IMR-90 (cell line): ENCODE measurements at regions of chr6 and their contacts with region 1.

Region 1: GRCh38 chr6:98845211-98846020 is 11.0 kb downstream of the POU3F2 start:
- DNase-seq: peak; percentile 78
- ATAC-seq: peak; percentile 92
- H3K4me3 ChIP-seq: no peak overlapping the region
- H3K27ac ChIP-seq: no peak overlapping the region
- H3K4me1 ChIP-seq: peaks cover 6% of the 10 kb centered on the region; the same call in 1 of the 2 replicates
- H3K27me3 ChIP-seq: peaks cover 82% of the 10 kb centered on the region
- CTCF ChIP-seq: peak; percentile 94
- POLR2A ChIP-seq: no peak; the same call in 1 of the 2 replicates
- RAD21 ChIP-seq: peak; percentile 93

Region 2: DNA sequence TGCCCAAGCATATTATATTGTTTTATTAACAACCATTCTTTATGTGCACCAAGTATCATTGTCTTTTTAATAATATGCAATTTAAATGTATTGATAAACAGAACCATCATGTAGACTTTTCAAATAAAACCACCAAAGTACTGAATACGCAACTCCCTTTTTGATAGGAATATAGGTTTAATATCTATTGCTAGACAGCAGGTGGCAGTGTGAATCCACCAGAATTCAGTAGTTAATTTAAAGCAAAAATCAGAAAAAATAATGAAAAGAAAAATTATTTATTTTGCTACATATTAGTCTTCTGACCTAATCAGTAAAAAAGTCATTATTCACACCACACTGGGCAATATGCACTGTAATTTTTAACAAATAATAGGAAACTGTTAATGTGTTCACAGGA is 1777.2 kb before region 1 on chr6:
- CTCF ChIA-PET with region 1: no interaction called
- POLR2A ChIA-PET with region 1: no interaction called
- dilution Hi-C with region 1: no loop called
- in situ Hi-C with region 1: no loop called
- intact Hi-C with region 1: loop called (anchors 1 kb)
- DNase-seq: peak; percentile 49
- ATAC-seq: peak; percentile 63; the same call in 1 of the 2 replicates
- H3K4me3 ChIP-seq: no peak overlapping the region
- H3K27ac ChIP-seq: no peak overlapping the region
- H3K4me1 ChIP-seq: no peaks in the 10 kb centered on the region
- H3K27me3 ChIP-seq: peaks cover 9% of the 10 kb centered on the region
- CTCF ChIP-seq: peak; percentile 70
- POLR2A ChIP-seq: no peak
- RAD21 ChIP-seq: peak; percentile 68

Region 3: DNA sequence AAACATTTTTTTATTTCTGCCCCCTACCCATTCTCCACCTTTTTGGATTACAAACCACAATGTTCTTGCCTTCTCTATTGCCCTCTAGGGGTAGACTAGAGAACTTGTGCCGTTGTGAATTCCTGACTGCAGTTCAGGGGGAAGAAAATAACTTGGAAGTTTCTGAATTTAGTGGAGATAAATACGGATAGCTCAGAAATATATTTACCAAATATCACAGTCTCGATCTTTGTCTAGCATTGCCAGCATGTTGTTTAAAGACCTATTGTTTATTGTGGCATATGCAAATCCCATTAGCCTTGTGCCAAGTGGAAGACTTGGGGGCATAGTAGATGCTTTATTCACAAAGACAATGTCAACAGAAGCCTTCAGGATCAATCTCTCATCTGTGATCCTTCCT is 1408.3 kb before region 1 on chr6:
- CTCF ChIA-PET with region 1: no interaction called
- POLR2A ChIA-PET with region 1: no interaction called
- dilution Hi-C with region 1: no loop called
- in situ Hi-C with region 1: no loop called
- intact Hi-C with region 1: loop called (anchors 1 kb)
- DNase-seq: peak; percentile 18
- ATAC-seq: peak; percentile 62; the same call in 1 of the 2 replicates
- H3K4me3 ChIP-seq: no peak overlapping the region
- H3K27ac ChIP-seq: no peak overlapping the region
- H3K4me1 ChIP-seq: no peaks in the 10 kb centered on the region
- H3K27me3 ChIP-seq: no peaks in the 10 kb centered on the region
- CTCF ChIP-seq: peak; percentile 64
- POLR2A ChIP-seq: no peak
- RAD21 ChIP-seq: peak; percentile 42

Region 4: DNA sequence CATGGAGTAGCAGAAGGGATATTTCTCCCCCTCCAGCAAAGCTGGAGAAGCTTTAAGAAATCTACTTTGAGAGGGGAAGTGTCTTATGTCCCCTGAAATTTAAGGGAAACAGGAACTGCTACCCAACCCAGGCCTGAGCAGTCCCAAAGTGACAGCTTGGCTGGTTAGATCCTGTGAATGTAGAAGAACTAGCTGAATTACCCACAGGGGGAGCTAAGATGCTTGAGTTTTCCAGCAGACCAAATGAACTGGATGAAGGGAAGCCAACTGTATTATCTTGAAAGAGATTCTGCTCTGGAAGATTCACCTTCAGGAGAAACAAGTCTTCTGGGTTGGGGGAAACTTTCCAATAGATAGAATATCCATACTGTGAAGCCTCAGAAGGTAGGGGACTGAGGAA is 1259.1 kb before region 1 on chr6:
- CTCF ChIA-PET with region 1: no interaction called
- POLR2A ChIA-PET with region 1: no interaction called
- dilution Hi-C with region 1: no loop called
- in situ Hi-C with region 1: no loop called
- intact Hi-C with region 1: loop called (anchors 2 kb)
- DNase-seq: peak; percentile 49
- ATAC-seq: no peak
- H3K4me3 ChIP-seq: no peak overlapping the region
- H3K27ac ChIP-seq: no peak overlapping the region
- H3K4me1 ChIP-seq: no peaks in the 10 kb centered on the region
- H3K27me3 ChIP-seq: no peaks in the 10 kb centered on the region
- CTCF ChIP-seq: peak; percentile 41
- POLR2A ChIP-seq: no peak
- RAD21 ChIP-seq: peak; percentile 54

Region 5: GRCh38 chr6:98980814-98981213 is 135.4 kb after region 1 on chr6:
- CTCF ChIA-PET with region 1: no interaction called
- POLR2A ChIA-PET with region 1: no interaction called
- dilution Hi-C with region 1: no loop called
- in situ Hi-C with region 1: no loop called
- intact Hi-C with region 1: no loop called
- DNase-seq: no peak
- ATAC-seq: no peak
- H3K4me3 ChIP-seq: no peak overlapping the region
- H3K27ac ChIP-seq: no peak overlapping the region
- H3K4me1 ChIP-seq: no peaks in the 10 kb centered on the region
- H3K27me3 ChIP-seq: no peaks in the 10 kb centered on the region; the same call in none of the 2 replicates
- CTCF ChIP-seq: no peak
- POLR2A ChIP-seq: no peak
- RAD21 ChIP-seq: no peak

Region 6: GRCh38 chr6:99064834-99065233 is 219.4 kb after region 1 on chr6:
- CTCF ChIA-PET with region 1: no interaction called
- POLR2A ChIA-PET with region 1: no interaction called
- dilution Hi-C with region 1: no loop called
- in situ Hi-C with region 1: no loop called
- intact Hi-C with region 1: no loop called
- DNase-seq: no peak
- ATAC-seq: no peak
- H3K4me3 ChIP-seq: no peak overlapping the region
- H3K27ac ChIP-seq: no peak overlapping the region
- H3K4me1 ChIP-seq: no peaks in the 10 kb centered on the region
- H3K27me3 ChIP-seq: no peaks in the 10 kb centered on the region
- CTCF ChIP-seq: no peak
- POLR2A ChIP-seq: no peak
- RAD21 ChIP-seq: no peak

Region 7: GRCh38 chr6:99119109-99120031 is 274.0 kb after region 1 on chr6:
- CTCF ChIA-PET with region 1: no interaction called
- POLR2A ChIA-PET with region 1: no interaction called
- dilution Hi-C with region 1: no loop called
- in situ Hi-C with region 1: no loop called
- intact Hi-C with region 1: loop called (anchors 1 kb)
- DNase-seq: peak; percentile 39
- ATAC-seq: peak; percentile 76
- H3K4me3 ChIP-seq: no peak overlapping the region
- H3K27ac ChIP-seq: no peak overlapping the region
- H3K4me1 ChIP-seq: no peaks in the 10 kb centered on the region
- H3K27me3 ChIP-seq: no peaks in the 10 kb centered on the region
- CTCF ChIP-seq: peak; percentile 77
- POLR2A ChIP-seq: no peak
- RAD21 ChIP-seq: peak; percentile 88